ENCODE measurements at regions of chr9 and their contacts with region 1.

Region 1: GRCh38 chr9:75890472-75891276 is at the start of gene PCSK5:
- DNase-seq: peak; percentile 86
- ATAC-seq: peak; percentile 89
- H3K4me3 ChIP-seq: peak within 1 kb of the TSS; percentile 71 to 74
- H3K27ac ChIP-seq: peak within 1 kb of the TSS; percentile 72
- H3K4me1 ChIP-seq: peaks cover 4 to 16% of the 10 kb centered on the region in 2 experiments; a peak in 2 of 4 replicates
- H3K27me3 ChIP-seq: no peaks in the 10 kb centered on the region
- CTCF ChIP-seq: peak in 1 of 3 experiments; percentile 14; a peak in 1 of 6 replicates
- POLR2A ChIP-seq: peak; percentile 88
- RAD21 ChIP-seq: peak; percentile 37
- total RNA-seq, gene PCSK5: 6.9 TPM

Region 2: GRCh38 chr9:75880618-75881017 is 10.1 kb before region 1 on chr9:
- CTCF ChIA-PET with region 1: no interaction called
- POLR2A ChIA-PET with region 1: interaction called, 14 read pairs
- RAD21 ChIA-PET with region 1: no interaction called
- intact Hi-C with region 1: no loop called
- DNase-seq: no peak
- ATAC-seq: no peak
- H3K4me3 ChIP-seq: no peak overlapping the region
- H3K27ac ChIP-seq: no peak overlapping the region
- H3K4me1 ChIP-seq: no peaks in the 10 kb centered on the region
- H3K27me3 ChIP-seq: no peaks in the 10 kb centered on the region
- CTCF ChIP-seq: no peak
- POLR2A ChIP-seq: no peak
- RAD21 ChIP-seq: no peak

Measured in HCT116 (cell line).